Activated CD4-positive, alpha-beta memory T cell treated with anti-CD3 and anti-CD28 coated beads for 36 hours (primary cell): ENCODE measurements at regions of chr1 and their contacts with region 1.

Region 1: GRCh38 chr1:39901698-39902459 is at the start of gene MYCL:
- DNase-seq: peak; percentile 78
- H3K4me3 Mint-ChIP-seq: peak within 1 kb of the TSS; percentile 61
- H3K27ac Mint-ChIP-seq: no peak within 1 kb of the TSS
- H3K4me1 Mint-ChIP-seq: peaks cover 6% of the 10 kb centered on the region
- H3K27me3 Mint-ChIP-seq: peaks cover 43% of the 10 kb centered on the region
- total RNA-seq, gene MYCL: 0.07 TPM in 1 of 2 experiments, not detected in the other

Region 2: DNA sequence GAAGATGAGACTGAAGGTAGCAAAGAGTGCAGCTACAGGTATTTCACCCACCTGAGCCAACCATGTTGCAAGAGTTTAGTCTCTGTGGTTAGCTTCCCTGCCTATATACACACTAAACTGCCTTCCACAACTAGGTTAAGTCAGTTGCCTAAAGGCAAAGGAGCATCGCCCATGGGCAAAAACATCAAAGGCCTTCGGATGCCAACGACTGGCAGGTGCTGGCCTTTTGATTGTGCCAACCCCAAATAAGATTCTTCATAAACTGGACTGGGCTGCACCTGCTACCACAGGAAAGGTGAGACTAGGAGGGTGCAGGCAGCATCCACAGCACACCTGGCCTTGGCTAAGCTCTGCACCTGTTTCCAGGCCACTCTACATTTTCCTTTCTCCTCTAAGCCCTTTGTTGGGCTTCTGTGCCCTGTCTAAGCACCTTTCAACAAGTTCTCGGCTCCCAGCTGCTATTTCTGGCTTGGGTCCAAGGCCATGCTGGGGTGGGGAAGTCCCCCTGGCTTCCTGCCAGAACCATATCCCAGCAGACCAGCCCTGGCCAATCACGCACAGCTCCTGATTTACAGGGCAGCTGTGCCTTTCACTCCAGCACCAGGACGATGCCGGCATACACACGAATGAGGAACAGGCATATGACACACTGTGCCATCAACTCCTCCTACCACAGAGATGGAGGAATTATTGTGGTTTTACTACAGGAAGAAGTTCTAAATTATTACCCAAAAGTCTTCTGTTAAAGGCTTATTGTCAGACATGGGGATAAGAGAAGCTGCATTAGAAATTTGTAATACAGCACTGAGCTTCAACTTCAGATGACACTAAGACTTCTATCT is 56.4 kb before region 1 on chr1:
- CTCF ChIA-PET with region 1: interaction called, 17 read pairs
- POLR2A ChIA-PET with region 1: interaction called, 9 read pairs
- intact Hi-C with region 1: no loop called
- DNase-seq: peak; percentile 90
- H3K4me3 Mint-ChIP-seq: peak overlapping the region; percentile 9
- H3K27ac Mint-ChIP-seq: peak overlapping the region; percentile 64
- H3K4me1 Mint-ChIP-seq: peaks cover 59% of the 10 kb centered on the region
- H3K27me3 Mint-ChIP-seq: no peaks in the 10 kb centered on the region

Region 3: GRCh38 chr1:39919545-39919944 is 17.7 kb after region 1 on chr1:
- CTCF ChIA-PET with region 1: interaction called, 16 read pairs
- POLR2A ChIA-PET with region 1: no interaction called
- intact Hi-C with region 1: no loop called
- DNase-seq: peak; percentile 68
- H3K4me3 Mint-ChIP-seq: no peak overlapping the region
- H3K27ac Mint-ChIP-seq: no peak overlapping the region
- H3K4me1 Mint-ChIP-seq: peaks cover 2% of the 10 kb centered on the region
- H3K27me3 Mint-ChIP-seq: peaks cover 4% of the 10 kb centered on the region

Region 4: GRCh38 chr1:39954816-39955546 is 53.1 kb after region 1 on chr1 and contains the start of gene MFSD2A:
- CTCF ChIA-PET with region 1: interaction called, 5 read pairs
- POLR2A ChIA-PET with region 1: interaction called, 5 read pairs
- intact Hi-C with region 1: loop called (anchors 5 kb)
- DNase-seq: peak; percentile 94
- H3K4me3 Mint-ChIP-seq: peak within 1 kb of the TSS; percentile 84
- H3K27ac Mint-ChIP-seq: peak within 1 kb of the TSS; percentile 75
- H3K4me1 Mint-ChIP-seq: peaks cover 30% of the 10 kb centered on the region
- H3K27me3 Mint-ChIP-seq: no peaks in the 10 kb centered on the region
- total RNA-seq, gene MFSD2A: 6.0 to 7.5 TPM

Region 5: GRCh38 chr1:40045182-40045581 is 143.3 kb after region 1 on chr1:
- CTCF ChIA-PET with region 1: no interaction called
- POLR2A ChIA-PET with region 1: no interaction called
- intact Hi-C with region 1: no loop called
- DNase-seq: no peak
- H3K4me3 Mint-ChIP-seq: peak overlapping the region; percentile 44
- H3K27ac Mint-ChIP-seq: peak overlapping the region; percentile 76
- H3K4me1 Mint-ChIP-seq: peaks cover 71% of the 10 kb centered on the region
- H3K27me3 Mint-ChIP-seq: no peaks in the 10 kb centered on the region